ENCODE measurements at regions of chr1 and their contacts with region 1.

Region 1: GRCh38 chr1:97137862-97138514 is 416.4 kb downstream of the PTBP2 start:
- DNase-seq: peak; percentile 67
- H3K4me3 Mint-ChIP-seq: no peak overlapping the region
- H3K27ac Mint-ChIP-seq: no peak overlapping the region
- H3K4me1 Mint-ChIP-seq: peaks cover 24% of the 10 kb centered on the region
- H3K27me3 Mint-ChIP-seq: no peaks in the 10 kb centered on the region
- CTCF ChIP-seq: peak; percentile 64

Region 2: GRCh38 chr1:97778718-97779117 is 640.7 kb after region 1 on chr1:
- CTCF ChIA-PET with region 1: no interaction called
- POLR2A ChIA-PET with region 1: no interaction called
- intact Hi-C with region 1: loop called (anchors 5 kb)
- DNase-seq: no peak
- H3K4me3 Mint-ChIP-seq: no peak overlapping the region
- H3K27ac Mint-ChIP-seq: no peak overlapping the region
- H3K4me1 Mint-ChIP-seq: no peaks in the 10 kb centered on the region
- H3K27me3 Mint-ChIP-seq: no peaks in the 10 kb centered on the region
- CTCF ChIP-seq: peak; percentile 10